CD14-positive monocyte (primary cell): ENCODE measurements at regions of chr5 and their contacts with region 1.

Region 1: GRCh38 chr5:88826646-88827585 is 56.1 kb downstream of the MEF2C start:
- DNase-seq: peak; percentile 76 to 95 (median 94)
- H3K4me3 ChIP-seq: peak overlapping the region; percentile 5 to 65 (median 34)
- H3K4me3 Mint-ChIP-seq: peak overlapping the region; percentile 65 to 72
- H3K27ac ChIP-seq: peak overlapping the region; percentile 66 to 87
- H3K27ac Mint-ChIP-seq: peak overlapping the region; percentile 92 to 99 (median 98)
- H3K4me1 ChIP-seq: peaks cover 66 to 85% of the 10 kb centered on the region in 2 donors
- H3K4me1 Mint-ChIP-seq: peaks cover 76% of the 10 kb centered on the region
- H3K27me3 ChIP-seq: no peaks in the 10 kb centered on the region
- H3K27me3 Mint-ChIP-seq: no peaks in the 10 kb centered on the region
- CTCF ChIP-seq: no peak

Region 2: GRCh38 chr5:87898574-87898973 is 928.3 kb before region 1 on chr5:
- intact Hi-C with region 1: no loop called
- DNase-seq: no peak
- H3K4me3 ChIP-seq: no peak overlapping the region
- H3K4me3 Mint-ChIP-seq: no peak overlapping the region
- H3K27ac ChIP-seq: no peak overlapping the region
- H3K27ac Mint-ChIP-seq: no peak overlapping the region
- H3K4me1 ChIP-seq: no peaks in the 10 kb centered on the region
- H3K4me1 Mint-ChIP-seq: no peaks in the 10 kb centered on the region
- H3K27me3 ChIP-seq: no peaks in the 10 kb centered on the region
- H3K27me3 Mint-ChIP-seq: peaks cover 0 to 3% (median 2%) of the 10 kb centered on the region in 3 donors
- CTCF ChIP-seq: no peak

Region 3: GRCh38 chr5:88761269-88761850 is 65.6 kb before region 1 on chr5:
- intact Hi-C with region 1: loop called in 1 of 2 experiments (anchors 10 kb)
- DNase-seq: peak; percentile 41 to 69 (median 69)
- H3K4me3 ChIP-seq: peak overlapping the region; percentile 18 to 76 (median 69)
- H3K4me3 Mint-ChIP-seq: peak overlapping the region; percentile 61 to 79
- H3K27ac ChIP-seq: peak overlapping the region; percentile 59 to 78
- H3K27ac Mint-ChIP-seq: peak overlapping the region; percentile 81 to 95 (median 91)
- H3K4me1 ChIP-seq: peaks cover 20 to 22% of the 10 kb centered on the region in 2 donors
- H3K4me1 Mint-ChIP-seq: peaks cover 24% of the 10 kb centered on the region
- H3K27me3 ChIP-seq: no peaks in the 10 kb centered on the region
- H3K27me3 Mint-ChIP-seq: peaks cover 0 to 3% (median 0%) of the 10 kb centered on the region in 3 donors
- CTCF ChIP-seq: no peak

Region 4: DNA sequence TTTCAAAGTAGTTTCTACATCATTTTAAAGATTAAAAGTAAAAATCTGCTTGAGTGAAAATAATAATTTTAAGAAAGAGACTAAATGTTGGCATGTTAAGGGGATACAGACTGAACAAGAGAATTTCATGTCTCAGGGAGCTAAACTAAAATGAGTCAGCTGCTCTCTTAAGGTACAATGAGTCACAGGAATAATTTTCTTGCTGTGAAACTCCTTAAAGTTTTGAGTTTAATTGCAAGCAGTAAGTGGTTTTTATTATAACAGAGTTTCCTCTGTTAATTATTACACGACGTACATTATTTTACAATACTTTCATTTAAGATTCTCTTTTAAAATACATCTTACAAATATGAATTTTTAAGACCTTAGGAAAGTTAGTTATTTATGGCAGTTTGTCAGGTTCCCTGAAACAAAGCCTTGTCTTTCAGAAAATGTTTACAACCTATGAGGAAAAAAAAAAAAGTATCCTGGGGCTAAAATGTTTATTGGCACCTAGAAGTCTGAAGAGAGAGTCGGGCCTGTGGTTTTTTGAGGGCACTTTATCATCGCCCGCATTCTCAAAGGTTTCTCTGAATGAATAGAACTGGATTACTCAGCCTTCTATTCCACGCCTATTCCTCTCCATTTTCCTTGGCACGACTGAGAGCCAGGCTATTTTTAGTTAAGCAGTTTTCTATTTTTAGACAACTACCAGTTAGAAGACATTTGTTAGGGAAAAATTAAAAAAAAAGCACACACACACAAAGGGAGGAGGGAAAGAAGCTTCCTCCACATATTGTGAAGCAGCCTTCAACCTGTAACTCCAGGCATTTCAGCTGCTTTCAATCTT is 41.3 kb before region 1 on chr5:
- intact Hi-C with region 1: loop called (anchors 2 to 5 kb)
- DNase-seq: peak; percentile 54 to 85 (median 82)
- H3K4me3 ChIP-seq: no peak overlapping the region
- H3K4me3 Mint-ChIP-seq: peak overlapping the region; percentile 27 to 30
- H3K27ac ChIP-seq: peak overlapping the region in 1 of 2 donors; percentile 68
- H3K27ac Mint-ChIP-seq: peak overlapping the region; percentile 81 to 96 (median 90)
- H3K4me1 ChIP-seq: peaks cover 33 to 35% of the 10 kb centered on the region in 2 donors
- H3K4me1 Mint-ChIP-seq: peaks cover 40% of the 10 kb centered on the region
- H3K27me3 ChIP-seq: no peaks in the 10 kb centered on the region
- H3K27me3 Mint-ChIP-seq: no peaks in the 10 kb centered on the region
- CTCF ChIP-seq: no peak

Region 5: DNA sequence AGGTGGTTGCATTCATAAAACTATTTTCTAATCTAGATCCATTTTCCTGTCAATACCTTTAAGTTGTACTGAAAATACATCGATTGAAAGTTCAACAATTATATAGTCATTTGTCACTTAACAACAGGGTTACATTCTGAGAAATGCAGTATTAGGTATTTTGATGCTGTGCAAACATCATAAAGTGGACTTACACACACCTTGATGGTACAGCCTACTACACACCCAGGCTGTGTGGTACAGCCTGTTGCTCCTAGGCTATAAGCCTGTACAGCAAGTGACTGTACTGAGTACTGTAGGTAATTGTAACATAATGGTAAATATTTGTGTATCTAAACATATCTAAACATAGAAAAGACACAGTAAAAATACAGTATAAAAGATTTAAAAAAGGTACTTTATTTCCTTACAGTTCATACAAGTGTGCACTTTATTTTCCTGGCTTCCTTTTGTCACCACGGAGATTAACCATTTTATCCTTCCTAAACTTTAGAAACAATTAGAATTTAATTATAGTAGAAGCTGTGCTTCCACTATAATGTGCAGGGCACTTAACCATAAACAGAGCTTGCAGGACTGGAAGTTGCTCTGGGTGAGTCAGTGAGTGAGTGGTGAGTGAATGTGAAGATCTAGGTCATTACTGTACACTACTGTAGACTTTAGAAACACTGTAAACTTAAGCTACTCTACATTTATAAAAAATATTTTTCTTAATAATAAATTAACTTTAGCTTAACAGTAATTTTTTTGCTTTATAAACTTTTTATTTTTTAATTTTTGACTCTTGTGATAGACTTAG is 99.0 kb after region 1 on chr5:
- intact Hi-C with region 1: no loop called
- DNase-seq: no peak
- H3K4me3 ChIP-seq: no peak overlapping the region
- H3K4me3 Mint-ChIP-seq: no peak overlapping the region
- H3K27ac ChIP-seq: no peak overlapping the region
- H3K27ac Mint-ChIP-seq: no peak overlapping the region
- H3K4me1 ChIP-seq: no peaks in the 10 kb centered on the region
- H3K4me1 Mint-ChIP-seq: no peaks in the 10 kb centered on the region
- H3K27me3 ChIP-seq: no peaks in the 10 kb centered on the region
- H3K27me3 Mint-ChIP-seq: no peaks in the 10 kb centered on the region
- CTCF ChIP-seq: no peak